ENCODE measurements at regions of chr1 and their contacts with region 1.

Region 1: GRCh38 chr1:203117611-203118575 is 9.6 kb upstream of the ADORA1 start:
- DNase-seq: peak; percentile 85
- H3K4me3 Mint-ChIP-seq: no peak overlapping the region
- H3K27ac Mint-ChIP-seq: no peak overlapping the region
- H3K4me1 Mint-ChIP-seq: peaks cover 10% of the 10 kb centered on the region
- H3K27me3 Mint-ChIP-seq: peaks cover 42% of the 10 kb centered on the region
- CTCF ChIP-seq: peak; percentile 99

Region 2: GRCh38 chr1:203133970-203134725 is 16.3 kb after region 1 on chr1:
- CTCF ChIA-PET with region 1: interaction called, 16 read pairs
- POLR2A ChIA-PET with region 1: interaction called, 3 read pairs
- intact Hi-C with region 1: no loop called
- DNase-seq: peak; percentile 89
- H3K4me3 Mint-ChIP-seq: no peak overlapping the region
- H3K27ac Mint-ChIP-seq: no peak overlapping the region
- H3K4me1 Mint-ChIP-seq: peaks cover 17% of the 10 kb centered on the region
- H3K27me3 Mint-ChIP-seq: no peaks in the 10 kb centered on the region
- CTCF ChIP-seq: no peak

Region 3: DNA sequence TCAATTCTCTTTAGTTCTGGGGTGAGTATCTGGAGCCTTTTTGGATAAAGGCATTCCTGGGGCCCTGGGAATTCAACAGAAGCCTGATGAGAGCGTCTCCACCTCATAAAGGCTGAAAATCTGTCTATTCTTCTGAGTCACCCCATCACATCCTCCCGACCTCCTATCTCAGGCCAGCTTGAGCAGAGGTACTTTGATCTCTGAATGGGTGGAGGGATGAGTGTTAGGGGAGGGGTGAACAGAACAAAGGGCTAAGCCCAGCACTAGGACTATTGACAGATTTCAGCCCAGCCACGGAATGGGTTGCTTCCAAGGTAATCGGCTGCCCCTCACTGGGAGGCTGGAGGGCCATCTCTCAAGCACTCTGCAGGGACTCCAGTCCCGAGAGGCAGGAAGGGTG is 60.2 kb after region 1 on chr1:
- CTCF ChIA-PET with region 1: interaction called, 89 read pairs
- POLR2A ChIA-PET with region 1: no interaction called
- intact Hi-C with region 1: no loop called
- DNase-seq: no peak
- H3K4me3 Mint-ChIP-seq: no peak overlapping the region
- H3K27ac Mint-ChIP-seq: no peak overlapping the region
- H3K4me1 Mint-ChIP-seq: no peaks in the 10 kb centered on the region
- H3K27me3 Mint-ChIP-seq: peaks cover 18% of the 10 kb centered on the region
- CTCF ChIP-seq: no peak

Region 4: GRCh38 chr1:203202431-203203245 is 84.7 kb after region 1 on chr1:
- CTCF ChIA-PET with region 1: interaction called, 11 read pairs
- POLR2A ChIA-PET with region 1: interaction called, 3 read pairs
- intact Hi-C with region 1: no loop called
- DNase-seq: peak; percentile 97
- H3K4me3 Mint-ChIP-seq: no peak overlapping the region
- H3K27ac Mint-ChIP-seq: no peak overlapping the region
- H3K4me1 Mint-ChIP-seq: peaks cover 22% of the 10 kb centered on the region
- H3K27me3 Mint-ChIP-seq: peaks cover 7% of the 10 kb centered on the region
- CTCF ChIP-seq: no peak